B cell (primary cell): ENCODE measurements at regions of chr13 and their contacts with region 1.

Region 1: DNA sequence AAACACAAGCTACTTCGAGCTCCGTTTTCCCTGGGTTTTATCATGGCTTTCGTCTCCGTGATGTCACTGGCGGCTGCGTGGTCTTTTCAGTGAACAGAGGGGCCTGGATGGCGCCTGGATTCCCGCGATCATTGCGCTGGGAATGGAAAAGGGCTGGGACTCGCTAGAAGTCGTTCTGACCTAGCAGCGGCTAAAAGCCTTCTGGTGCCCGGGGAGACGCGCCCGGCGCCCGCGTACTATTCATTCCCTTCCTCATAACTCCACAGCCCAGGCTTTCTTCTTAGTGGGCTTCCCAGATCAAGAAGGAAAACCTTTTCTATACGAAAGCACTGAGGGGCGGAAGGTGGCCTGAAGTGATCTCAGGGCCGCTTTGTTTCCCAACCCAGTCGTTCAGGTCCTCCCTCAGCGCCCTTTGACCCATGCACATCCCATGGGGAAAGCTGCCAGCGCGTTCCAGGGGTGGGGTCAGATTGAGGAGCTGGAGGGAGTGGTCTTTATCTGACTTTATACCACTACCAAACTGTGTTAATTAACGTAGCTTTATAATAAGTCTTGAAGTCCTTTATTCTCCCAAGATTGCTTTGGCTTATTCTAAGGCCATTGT is 96.6 kb downstream of the ELF1 start:
- DNase-seq: no peak
- ATAC-seq: no peak
- H3K4me3 ChIP-seq: no peak overlapping the region
- H3K4me3 Mint-ChIP-seq: peak overlapping the region; percentile 94
- H3K27ac ChIP-seq: no peak overlapping the region
- H3K27ac Mint-ChIP-seq: peak overlapping the region; percentile 67
- H3K4me1 ChIP-seq: peaks cover 9 to 16% of the 10 kb centered on the region in 2 donors
- H3K4me1 Mint-ChIP-seq: peaks cover 21% of the 10 kb centered on the region
- H3K27me3 ChIP-seq: no peaks in the 10 kb centered on the region
- H3K27me3 Mint-ChIP-seq: no peaks in the 10 kb centered on the region
- CTCF ChIP-seq: no peak

Region 2: GRCh38 chr13:40664100-40664998 is 258.2 kb before region 1 on chr13:
- CTCF ChIA-PET with region 1: no interaction called
- POLR2A ChIA-PET with region 1: no interaction called
- intact Hi-C with region 1: no loop called
- DNase-seq: peak; percentile 83
- ATAC-seq: peak; percentile 31
- H3K4me3 ChIP-seq: peak overlapping the region; percentile 81 to 95 (median 84)
- H3K4me3 Mint-ChIP-seq: peak overlapping the region; percentile 96
- H3K27ac ChIP-seq: peak overlapping the region; percentile 84
- H3K27ac Mint-ChIP-seq: peak overlapping the region; percentile 95
- H3K4me1 ChIP-seq: peaks cover 44 to 52% of the 10 kb centered on the region in 2 donors
- H3K4me1 Mint-ChIP-seq: peaks cover 57% of the 10 kb centered on the region
- H3K27me3 ChIP-seq: no peaks in the 10 kb centered on the region
- H3K27me3 Mint-ChIP-seq: no peaks in the 10 kb centered on the region
- CTCF ChIP-seq: no peak

Region 3: DNA sequence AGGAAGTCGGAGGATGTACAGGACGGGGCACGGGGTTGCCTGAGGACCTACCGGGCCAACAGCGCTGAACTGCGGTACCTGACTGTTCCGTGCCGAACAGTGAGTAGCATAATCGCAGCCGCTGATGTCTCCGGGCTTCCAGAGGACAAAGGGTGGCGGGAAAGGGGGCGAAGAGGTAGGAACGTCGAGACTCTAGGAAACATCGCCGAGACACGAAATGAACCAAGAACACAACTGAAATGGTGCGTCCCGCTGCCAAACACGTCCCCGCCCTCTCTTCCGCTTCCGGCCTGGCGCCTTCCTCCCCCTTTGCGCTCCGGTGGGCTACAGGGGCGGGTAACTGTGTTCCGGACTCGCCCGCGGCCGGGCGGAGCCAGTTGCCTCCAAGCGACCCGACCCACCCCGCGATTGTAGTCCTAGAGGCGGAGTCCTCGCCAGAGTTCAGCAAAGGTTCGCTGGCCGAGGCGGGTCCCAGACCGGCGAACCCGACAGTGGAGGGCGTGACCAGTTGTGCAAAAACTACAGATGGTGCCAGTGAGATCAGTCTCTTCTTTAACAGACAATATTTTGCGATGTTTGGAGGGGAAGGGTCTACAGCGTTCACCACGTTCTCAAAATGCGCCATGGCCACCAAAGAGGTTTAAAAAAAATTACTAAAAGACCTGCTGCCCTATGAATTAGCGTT is 151.5 kb before region 1 on chr13 and contains the start of gene MRPS31:
- CTCF ChIA-PET with region 1: interaction called, 3 read pairs
- POLR2A ChIA-PET with region 1: no interaction called
- intact Hi-C with region 1: loop called (anchors 1 kb)
- DNase-seq: peak; percentile 95
- ATAC-seq: peak; percentile 100
- H3K4me3 ChIP-seq: peak within 1 kb of the TSS; percentile 65 to 99 (median 99)
- H3K4me3 Mint-ChIP-seq: peak within 1 kb of the TSS; percentile 100
- H3K27ac ChIP-seq: peak within 1 kb of the TSS; percentile 64 to 88
- H3K27ac Mint-ChIP-seq: peak within 1 kb of the TSS; percentile 97
- H3K4me1 ChIP-seq: peaks cover 12 to 19% of the 10 kb centered on the region in 2 donors
- H3K4me1 Mint-ChIP-seq: peaks cover 21% of the 10 kb centered on the region
- H3K27me3 ChIP-seq: no peaks in the 10 kb centered on the region
- H3K27me3 Mint-ChIP-seq: no peaks in the 10 kb centered on the region
- CTCF ChIP-seq: no peak
- total RNA-seq, gene MRPS31: 29.7 and 34.4 TPM in 2 replicates

Region 4: GRCh38 chr13:40974460-40975407 is 52.2 kb after region 1 on chr13:
- CTCF ChIA-PET with region 1: interaction called, 10 read pairs
- POLR2A ChIA-PET with region 1: no interaction called
- intact Hi-C with region 1: no loop called
- DNase-seq: peak; percentile 71
- ATAC-seq: peak; percentile 87
- H3K4me3 ChIP-seq: peak overlapping the region in 1 of 5 experiments; percentile 30
- H3K4me3 Mint-ChIP-seq: peak overlapping the region; percentile 51
- H3K27ac ChIP-seq: peak overlapping the region in 1 of 2 donors; percentile 54
- H3K27ac Mint-ChIP-seq: peak overlapping the region; percentile 57
- H3K4me1 ChIP-seq: peaks cover 70 to 92% of the 10 kb centered on the region in 2 donors
- H3K4me1 Mint-ChIP-seq: peaks cover 90% of the 10 kb centered on the region
- H3K27me3 ChIP-seq: no peaks in the 10 kb centered on the region
- H3K27me3 Mint-ChIP-seq: no peaks in the 10 kb centered on the region
- CTCF ChIP-seq: peak; percentile 72

Region 5: DNA sequence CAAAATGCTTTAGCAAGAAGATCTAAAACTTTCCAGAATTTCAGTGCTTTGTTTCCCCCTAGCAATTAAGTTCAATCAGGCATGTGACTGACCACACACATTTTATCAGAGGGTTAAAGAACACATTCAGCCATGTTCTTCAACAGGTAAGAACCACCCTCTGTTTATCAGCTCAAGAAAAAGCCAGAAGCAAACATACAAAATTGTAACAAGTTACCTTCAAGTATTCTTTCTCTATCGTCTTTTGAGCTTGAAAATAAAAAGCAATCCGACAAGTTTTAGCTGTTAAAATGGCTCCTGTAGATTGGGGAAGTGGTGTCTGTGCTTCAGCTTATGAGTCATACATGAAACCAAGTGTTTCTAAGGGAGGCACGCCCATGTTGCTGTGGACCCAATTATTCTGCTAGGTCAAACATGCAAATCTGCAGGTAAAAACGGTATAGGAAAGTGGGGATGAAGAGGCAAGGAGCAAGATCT is 96.5 kb after region 1 on chr13 and contains the start of gene ELF1:
- CTCF ChIA-PET with region 1: interaction called, 6 read pairs
- POLR2A ChIA-PET with region 1: interaction called, 7 read pairs
- intact Hi-C with region 1: loop called (anchors 1 kb)
- DNase-seq: peak; percentile 91
- ATAC-seq: peak; percentile 89
- H3K4me3 ChIP-seq: peak within 1 kb of the TSS; percentile 65 to 99 (median 75)
- H3K4me3 Mint-ChIP-seq: peak within 1 kb of the TSS; percentile 94
- H3K27ac ChIP-seq: peak within 1 kb of the TSS; percentile 96 to 100
- H3K27ac Mint-ChIP-seq: peak within 1 kb of the TSS; percentile 98
- H3K4me1 ChIP-seq: peaks cover 29 to 33% of the 10 kb centered on the region in 2 donors
- H3K4me1 Mint-ChIP-seq: peaks cover 52% of the 10 kb centered on the region
- H3K27me3 ChIP-seq: no peaks in the 10 kb centered on the region
- H3K27me3 Mint-ChIP-seq: no peaks in the 10 kb centered on the region
- CTCF ChIP-seq: no peak
- total RNA-seq, gene ELF1: 185 and 186 TPM in 2 replicates

Region 6: DNA sequence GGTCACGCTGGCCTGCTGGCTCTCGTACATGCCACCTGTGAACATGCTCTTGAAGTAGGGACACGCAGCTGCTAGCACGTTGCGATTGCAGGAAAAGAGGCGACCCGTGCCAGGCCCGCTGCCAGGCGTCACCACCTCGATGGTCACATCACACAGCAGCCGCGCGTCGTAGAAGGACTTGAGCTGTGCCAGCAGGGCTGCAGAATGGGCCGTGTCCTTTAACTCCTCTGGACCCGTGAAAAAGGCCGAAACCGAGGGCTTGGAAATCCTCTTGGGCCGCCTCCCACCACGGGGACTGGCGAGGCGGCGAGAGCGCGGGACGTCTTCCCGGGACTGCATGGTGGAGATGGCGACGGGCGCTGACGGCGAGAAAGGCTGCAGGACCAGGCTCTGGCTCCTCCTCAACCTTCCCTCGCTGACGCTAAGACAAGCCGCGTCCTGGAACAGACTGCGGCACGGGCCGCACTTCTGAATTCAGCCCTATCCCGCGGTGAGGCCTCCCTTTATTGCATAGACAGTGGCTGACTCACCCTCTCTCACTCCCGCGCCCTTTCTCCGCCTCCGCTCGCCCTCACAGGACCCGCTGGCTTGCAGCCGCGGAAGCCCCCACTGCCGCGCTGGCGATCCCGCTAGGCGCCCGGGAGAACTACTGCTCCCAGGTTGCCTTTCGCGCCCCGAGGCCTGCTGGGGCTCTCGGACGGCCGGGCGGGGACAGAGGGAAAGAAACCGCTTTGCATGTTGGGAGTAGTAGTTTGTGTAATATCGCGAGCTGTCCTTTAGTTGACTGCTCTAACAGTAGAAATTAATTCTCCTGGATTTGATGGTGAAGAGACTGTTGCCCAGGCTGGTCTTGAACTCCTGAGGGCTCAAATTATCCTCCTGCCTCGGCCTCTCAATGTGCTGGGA is 271.6 kb after region 1 on chr13 and contains the start of gene KBTBD7:
- CTCF ChIA-PET with region 1: no interaction called
- POLR2A ChIA-PET with region 1: no interaction called
- intact Hi-C with region 1: loop called (anchors 1 kb)
- DNase-seq: peak; percentile 90
- ATAC-seq: peak; percentile 94
- H3K4me3 ChIP-seq: peak within 1 kb of the TSS; percentile 59 to 92 (median 88)
- H3K4me3 Mint-ChIP-seq: peak within 1 kb of the TSS; percentile 96
- H3K27ac ChIP-seq: peak within 1 kb of the TSS; percentile 32 to 63
- H3K27ac Mint-ChIP-seq: peak within 1 kb of the TSS; percentile 94
- H3K4me1 ChIP-seq: peaks cover 33 to 34% of the 10 kb centered on the region in 2 donors
- H3K4me1 Mint-ChIP-seq: peaks cover 45% of the 10 kb centered on the region
- H3K27me3 ChIP-seq: no peaks in the 10 kb centered on the region
- H3K27me3 Mint-ChIP-seq: no peaks in the 10 kb centered on the region
- CTCF ChIP-seq: no peak
- total RNA-seq, gene KBTBD7: 8.4 and 9.2 TPM in 2 replicates

Region 7: GRCh38 chr13:41263261-41264027 is 340.9 kb after region 1 on chr13 and contains the start of gene MTRF1:
- CTCF ChIA-PET with region 1: no interaction called
- POLR2A ChIA-PET with region 1: no interaction called
- intact Hi-C with region 1: loop called (anchors 5 kb)
- DNase-seq: peak; percentile 92
- ATAC-seq: peak; percentile 92
- H3K4me3 ChIP-seq: peak within 1 kb of the TSS; percentile 62 to 95 (median 76)
- H3K4me3 Mint-ChIP-seq: peak within 1 kb of the TSS; percentile 96
- H3K27ac ChIP-seq: peak within 1 kb of the TSS; percentile 79 to 92
- H3K27ac Mint-ChIP-seq: peak within 1 kb of the TSS; percentile 98
- H3K4me1 ChIP-seq: peaks cover 6 to 7% of the 10 kb centered on the region in 2 donors
- H3K4me1 Mint-ChIP-seq: peaks cover 21% of the 10 kb centered on the region
- H3K27me3 ChIP-seq: no peaks in the 10 kb centered on the region
- H3K27me3 Mint-ChIP-seq: no peaks in the 10 kb centered on the region
- CTCF ChIP-seq: no peak
- total RNA-seq, gene MTRF1: 29.8 and 36.0 TPM in 2 replicates